Thyroid gland (tissue), 4 donors: ENCODE measurements at regions of chr1 and their contacts with region 1.

Region 1: DNA sequence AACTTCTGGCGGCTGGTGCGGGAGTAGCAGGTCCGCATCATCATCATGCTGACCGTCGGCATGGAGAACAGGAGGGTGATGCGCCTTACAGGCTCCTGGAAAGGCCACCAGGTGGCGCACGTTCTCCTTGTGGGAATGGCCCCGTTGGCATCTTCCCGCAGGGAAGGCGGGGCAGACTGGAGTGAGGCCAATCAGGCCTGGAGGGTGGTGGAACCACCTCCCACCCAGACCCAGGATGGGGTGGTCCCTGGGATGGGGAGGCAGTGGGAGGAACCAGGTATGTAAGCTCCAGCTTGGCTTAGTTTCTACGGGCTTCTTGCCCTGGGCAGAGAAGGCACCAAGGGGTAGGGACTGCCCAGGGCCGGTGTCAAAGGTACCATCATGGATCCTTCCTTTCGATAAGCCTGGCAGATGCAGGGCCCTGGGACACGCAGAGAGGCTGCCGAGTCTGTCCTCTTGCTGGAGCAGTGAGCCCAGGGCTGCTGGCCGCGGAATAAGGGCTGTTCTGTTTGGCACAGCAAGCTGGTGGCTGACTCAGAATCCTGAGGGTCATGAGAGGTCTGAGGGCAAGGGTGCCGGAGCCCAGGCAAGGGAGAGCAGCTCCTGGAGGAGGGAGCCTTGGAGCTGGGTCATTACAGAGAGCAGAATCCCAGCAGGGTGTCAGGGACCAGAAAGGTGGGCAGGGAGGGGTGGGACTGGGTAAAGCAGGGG is 8.7 kb upstream of the LGR6 start:
- DNase-seq: peak; percentile 84 to 85
- H3K4me3 ChIP-seq: no peak overlapping the region
- H3K27ac ChIP-seq: no peak overlapping the region
- H3K4me1 ChIP-seq: peaks cover 0 to 4% of the 10 kb centered on the region in 2 donors
- H3K27me3 ChIP-seq: no peaks in the 10 kb centered on the region
- CTCF ChIP-seq: peak; percentile 47 to 87 (median 73)
- POLR2A ChIP-seq: no peak

Region 2: GRCh38 chr1:202315576-202316168 is 130.8 kb after region 1 on chr1:
- intact Hi-C with region 1: loop called (anchors 5 kb)
- DNase-seq: peak; percentile 79 to 84
- H3K4me3 ChIP-seq: no peak overlapping the region
- H3K27ac ChIP-seq: no peak overlapping the region
- H3K4me1 ChIP-seq: no peaks in the 10 kb centered on the region
- H3K27me3 ChIP-seq: no peaks in the 10 kb centered on the region
- CTCF ChIP-seq: peak; percentile 62 to 93 (median 90)
- POLR2A ChIP-seq: no peak

Region 3: GRCh38 chr1:202710070-202711045 is 525.5 kb after region 1 on chr1 and contains the start of gene SYT2:
- intact Hi-C with region 1: loop called (anchors 10 kb)
- DNase-seq: peak; percentile 54 to 57
- H3K4me3 ChIP-seq: peak within 1 kb of the TSS in 1 of 3 donors; percentile 12
- H3K27ac ChIP-seq: no peak within 1 kb of the TSS
- H3K4me1 ChIP-seq: peaks cover 12 to 17% of the 10 kb centered on the region in 2 donors
- H3K27me3 ChIP-seq: peaks cover 11% of the 10 kb centered on the region
- CTCF ChIP-seq: no peak
- POLR2A ChIP-seq: no peak
- total RNA-seq, gene SYT2: under 0.01 to 0.38 TPM in 2 of 4 donors, not detected in the others